Aorta (tissue), 5 donors: ENCODE measurements at regions of chr9 and their contacts with region 1.

Region 1: GRCh38 chr9:76704593-76705204 is 59.5 kb upstream of the PCA3 start:
- DNase-seq: no peak
- ATAC-seq: peak; percentile 78
- H3K4me3 ChIP-seq: no peak overlapping the region
- H3K27ac ChIP-seq: no peak overlapping the region
- H3K4me1 ChIP-seq: peaks cover 0 to 5% of the 10 kb centered on the region in 2 donors
- H3K27me3 ChIP-seq: no peaks in the 10 kb centered on the region

Region 2: GRCh38 chr9:76403352-76403751 is 301.3 kb before region 1 on chr9:
- intact Hi-C with region 1: loop called in 1 of 2 experiments (anchors 5 kb)
- DNase-seq: no peak
- ATAC-seq: peak; percentile 57
- H3K4me3 ChIP-seq: peak overlapping the region in 1 of 2 donors; percentile 3
- H3K27ac ChIP-seq: peak overlapping the region in 1 of 2 donors; percentile 30
- H3K4me1 ChIP-seq: no peaks in the 10 kb centered on the region
- H3K27me3 ChIP-seq: no peaks in the 10 kb centered on the region

Region 3: DNA sequence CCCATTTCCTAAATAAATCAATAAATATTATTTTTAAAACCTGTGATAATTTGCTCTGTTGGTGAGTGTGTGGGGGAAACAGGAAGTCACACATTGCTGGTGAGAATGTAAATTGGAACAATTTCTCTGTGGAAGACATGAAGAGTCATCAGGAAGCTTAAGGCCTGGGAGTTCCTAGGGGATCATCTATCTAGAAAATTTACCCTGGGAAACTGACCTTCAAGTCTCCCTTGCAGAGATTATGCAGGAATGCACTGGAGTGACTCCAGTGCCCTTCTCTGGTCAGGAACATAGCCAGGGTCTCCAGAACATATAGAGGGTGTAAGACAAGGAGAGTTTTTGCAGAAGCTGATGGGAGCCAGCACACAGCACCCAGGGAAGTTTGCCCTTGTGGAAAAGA is 258.7 kb before region 1 on chr9:
- intact Hi-C with region 1: loop called (anchors 2 to 5 kb)
- DNase-seq: no peak
- ATAC-seq: no peak
- H3K4me3 ChIP-seq: no peak overlapping the region
- H3K27ac ChIP-seq: no peak overlapping the region
- H3K4me1 ChIP-seq: no peaks in the 10 kb centered on the region
- H3K27me3 ChIP-seq: no peaks in the 10 kb centered on the region

Region 4: GRCh38 chr9:76667521-76667957 is 37.2 kb before region 1 on chr9:
- intact Hi-C with region 1: loop called in 1 of 2 experiments (anchors 5 kb)
- DNase-seq: no peak
- ATAC-seq: no peak
- H3K4me3 ChIP-seq: no peak overlapping the region
- H3K27ac ChIP-seq: peak overlapping the region in 1 of 2 donors; percentile 21
- H3K4me1 ChIP-seq: peaks cover 0 to 11% of the 10 kb centered on the region in 2 donors
- H3K27me3 ChIP-seq: no peaks in the 10 kb centered on the region